Astrocyte of the cerebellum (primary cell): ENCODE measurements at regions of chr2 and their contacts with region 1.

Region 1: DNA sequence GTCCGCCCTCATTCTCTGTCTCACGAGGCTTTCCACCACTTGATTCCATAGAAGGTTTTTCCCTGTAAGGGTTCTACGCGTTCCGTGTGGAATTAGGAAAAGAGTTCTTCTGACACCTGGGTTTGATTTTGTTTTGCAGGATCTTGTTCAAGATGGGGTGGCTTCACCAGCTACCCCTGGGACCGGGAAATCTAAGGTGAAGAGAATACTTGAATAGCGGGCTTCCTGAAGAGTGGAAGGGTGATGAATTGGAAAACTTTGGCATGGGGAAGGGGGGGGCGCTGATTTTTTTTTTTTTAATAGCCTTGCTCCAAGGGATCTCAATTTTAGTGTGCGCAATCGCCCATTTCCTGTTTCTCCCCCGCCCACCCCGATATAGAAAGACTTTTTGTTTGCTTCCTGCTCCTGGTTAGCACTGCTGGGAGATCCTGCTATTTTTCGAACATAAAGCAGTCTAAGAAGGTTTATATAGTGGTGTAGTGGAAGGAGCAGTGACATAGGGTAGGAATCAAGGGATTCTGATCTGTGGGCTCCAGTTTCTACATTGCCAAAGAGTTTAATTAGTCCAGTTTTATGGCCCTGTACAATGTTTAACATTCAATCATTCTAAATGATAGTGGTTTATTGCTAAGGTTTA is 606 bp downstream of the GCC2 start:
- DNase-seq: no peak
- H3K4me3 ChIP-seq: peak overlapping the region; percentile 97
- CTCF ChIP-seq: no peak

Region 2: DNA sequence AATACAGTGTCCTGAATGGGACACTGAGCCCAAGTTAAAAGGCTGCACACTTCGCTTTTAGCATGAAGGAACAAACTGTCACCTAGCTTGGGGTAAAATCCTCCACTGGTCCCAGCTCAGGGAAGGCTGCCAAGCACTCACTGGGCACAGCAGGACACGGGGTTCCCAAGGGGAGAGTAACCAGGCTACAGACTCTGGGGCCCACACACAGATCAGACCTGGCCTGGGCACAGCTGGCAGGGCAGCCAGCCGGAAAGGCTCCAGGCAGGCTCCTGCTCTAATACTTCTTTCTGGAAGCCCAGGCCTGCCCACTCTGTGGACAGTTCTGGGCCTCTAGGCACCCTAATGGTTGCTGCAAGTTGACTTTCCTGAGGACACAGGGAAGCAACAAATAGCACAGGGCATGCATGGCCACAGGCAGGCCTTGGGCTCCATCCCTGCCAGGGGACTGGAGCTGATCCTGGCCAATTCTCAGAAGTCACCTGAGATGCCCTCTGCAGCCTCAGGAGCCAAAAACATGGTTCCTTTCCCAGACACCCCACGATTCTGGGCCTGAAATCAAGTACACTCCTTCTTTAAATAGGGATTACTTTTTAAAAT is 228.6 kb before region 1 on chr2:
- in situ Hi-C with region 1: no loop called
- DNase-seq: no peak
- H3K4me3 ChIP-seq: no peak overlapping the region
- CTCF ChIP-seq: no peak

Region 3: GRCh38 chr2:108385411-108386071 is 64.1 kb before region 1 on chr2:
- in situ Hi-C with region 1: no loop called
- DNase-seq: no peak
- H3K4me3 ChIP-seq: no peak overlapping the region
- CTCF ChIP-seq: no peak

Region 4: GRCh38 chr2:108396845-108397244 is 52.8 kb before region 1 on chr2:
- in situ Hi-C with region 1: no loop called
- DNase-seq: no peak
- H3K4me3 ChIP-seq: no peak overlapping the region
- CTCF ChIP-seq: peak; percentile 24

Region 5: DNA sequence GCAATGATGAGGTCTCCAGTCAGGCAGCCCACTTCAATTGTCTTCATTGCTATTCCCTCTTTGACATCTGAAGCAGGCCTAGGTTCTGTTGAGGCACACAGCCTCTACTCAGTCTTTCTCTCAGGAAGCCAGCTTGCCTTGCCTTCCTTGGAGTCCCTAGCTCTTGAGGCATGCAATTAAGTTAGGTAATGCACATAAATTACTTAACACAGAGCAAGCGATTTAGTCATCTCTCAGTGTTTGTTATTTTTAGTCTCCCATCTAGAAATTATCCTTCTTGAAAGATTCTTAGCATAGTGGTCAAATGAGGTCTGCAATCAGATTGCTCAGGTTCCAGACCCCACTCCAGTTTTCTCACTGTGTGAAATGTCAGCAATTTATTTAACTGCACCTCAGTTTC is 39.8 kb before region 1 on chr2:
- in situ Hi-C with region 1: loop called (anchors 5 kb)
- DNase-seq: no peak
- H3K4me3 ChIP-seq: no peak overlapping the region
- CTCF ChIP-seq: no peak

Region 6: DNA sequence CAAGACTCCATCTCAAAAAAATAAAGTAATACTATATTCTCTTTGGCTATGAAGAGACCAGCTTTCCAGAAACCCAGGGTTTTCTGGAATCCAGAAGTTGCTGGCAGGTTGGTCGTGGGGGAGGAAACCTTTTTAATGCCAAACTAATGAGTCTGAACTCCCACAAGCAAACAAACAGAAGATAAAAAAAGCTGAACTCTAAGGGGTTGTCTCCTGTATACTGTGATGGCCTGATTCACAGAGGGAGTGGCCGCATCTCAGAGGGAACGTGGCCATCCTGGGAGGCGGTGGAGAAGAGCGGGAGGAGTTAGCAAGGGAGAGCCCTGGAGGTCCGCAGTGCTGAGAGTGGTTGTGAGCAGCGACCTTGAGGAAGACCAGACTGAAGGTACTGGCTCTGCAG is 120.8 kb after region 1 on chr2:
- in situ Hi-C with region 1: loop called (anchors 5 kb)
- DNase-seq: no peak
- H3K4me3 ChIP-seq: no peak overlapping the region
- CTCF ChIP-seq: no peak